OCI-LY7 (cell line): ENCODE measurements at regions of chr21 and their contacts with region 1.

Region 1: DNA sequence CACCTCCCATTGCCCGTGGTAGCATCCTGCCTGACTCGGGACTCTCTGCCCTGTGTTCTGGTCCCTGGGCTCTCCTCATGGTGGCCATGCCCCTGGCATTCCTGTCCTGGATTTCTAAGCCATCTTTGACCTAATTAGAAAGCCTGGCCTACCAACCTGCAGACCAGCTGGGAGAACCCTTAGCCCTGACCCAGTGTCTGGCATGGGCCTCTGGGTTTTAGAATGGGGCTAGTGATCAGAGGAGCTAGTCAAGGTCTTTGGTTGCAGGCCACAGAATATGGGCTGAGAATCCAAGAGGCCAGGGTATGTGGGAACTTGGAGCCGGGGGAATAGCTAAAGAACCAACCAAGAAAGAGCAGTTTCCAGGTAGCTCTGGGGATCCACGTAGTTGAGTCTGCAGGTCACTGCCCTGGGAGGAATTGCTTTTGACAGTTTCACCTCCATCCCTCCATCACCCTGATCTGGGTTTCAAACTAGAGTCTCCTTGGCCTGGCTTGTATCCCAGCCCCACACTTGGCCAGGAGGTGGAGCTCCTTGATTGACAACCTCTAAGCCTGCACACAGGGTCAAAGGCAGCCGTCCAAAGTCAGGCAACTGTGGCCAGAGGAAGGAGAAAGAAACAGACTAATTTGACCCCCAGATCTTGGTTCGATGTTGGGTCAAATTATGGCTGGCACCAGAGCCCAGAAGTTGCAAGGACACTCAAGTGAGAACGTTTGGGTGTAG is 54.7 kb upstream of the ABCG1 start:
- DNase-seq: peak; percentile 87
- H3K4me3 ChIP-seq: no peak overlapping the region
- H3K27ac ChIP-seq: peak overlapping the region; percentile 41
- H3K4me1 ChIP-seq: peaks cover 29% of the 10 kb centered on the region
- CTCF ChIP-seq: peak; percentile 99

Region 2: DNA sequence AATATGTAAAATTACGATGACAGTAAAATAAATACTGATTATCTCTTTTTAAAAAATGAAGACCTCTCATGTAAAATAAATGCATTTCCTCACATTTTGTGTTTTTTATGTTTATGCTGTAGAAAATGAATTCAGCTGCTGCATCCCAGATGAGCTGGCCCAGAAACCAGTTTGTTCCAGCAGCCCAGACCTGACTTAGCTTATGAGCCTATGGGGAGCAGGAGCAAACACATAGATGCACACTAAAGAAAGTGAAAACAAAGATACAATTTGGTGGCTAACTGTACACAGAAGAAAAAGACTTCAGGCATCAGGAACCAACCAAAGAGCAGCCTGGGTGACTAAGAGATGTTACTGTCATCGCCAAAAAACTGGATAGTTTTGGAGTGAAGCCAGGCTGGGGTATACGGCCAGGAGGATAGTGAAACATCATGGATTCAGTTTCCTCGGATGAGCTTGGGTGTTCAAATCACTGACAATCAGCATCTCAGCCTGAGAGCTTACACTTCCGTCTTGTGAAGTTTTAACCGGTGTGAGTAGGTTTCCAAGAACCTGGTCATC is 1110.1 kb before region 1 on chr21:
- CTCF ChIA-PET with region 1: no interaction called
- POLR2A ChIA-PET with region 1: no interaction called
- intact Hi-C with region 1: no loop called
- DNase-seq: no peak
- H3K4me3 ChIP-seq: no peak overlapping the region
- H3K27ac ChIP-seq: no peak overlapping the region
- H3K4me1 ChIP-seq: no peaks in the 10 kb centered on the region
- CTCF ChIP-seq: no peak

Region 3: DNA sequence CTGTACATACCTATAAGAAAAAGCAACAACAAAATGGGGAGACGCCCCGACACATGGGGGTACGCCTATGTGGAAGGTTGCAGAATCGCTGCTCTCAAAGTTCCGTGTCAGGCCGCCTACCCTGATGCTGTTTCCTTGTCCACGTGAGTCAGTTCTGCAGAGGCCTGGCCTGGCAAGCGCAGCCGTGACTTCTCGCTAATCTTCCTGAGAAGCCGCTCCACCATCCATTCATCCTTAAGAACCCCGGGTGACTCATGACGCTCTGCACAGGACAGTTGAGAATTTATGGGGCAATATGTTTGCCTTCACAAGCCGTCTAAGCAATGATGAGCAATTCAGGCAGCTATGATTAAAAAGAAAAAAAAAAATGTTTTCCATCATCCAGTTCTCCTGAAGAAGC is 534.0 kb before region 1 on chr21:
- CTCF ChIA-PET with region 1: no interaction called
- POLR2A ChIA-PET with region 1: no interaction called
- intact Hi-C with region 1: no loop called
- DNase-seq: no peak
- H3K4me3 ChIP-seq: no peak overlapping the region
- H3K27ac ChIP-seq: no peak overlapping the region
- H3K4me1 ChIP-seq: no peaks in the 10 kb centered on the region
- CTCF ChIP-seq: no peak

Region 4: DNA sequence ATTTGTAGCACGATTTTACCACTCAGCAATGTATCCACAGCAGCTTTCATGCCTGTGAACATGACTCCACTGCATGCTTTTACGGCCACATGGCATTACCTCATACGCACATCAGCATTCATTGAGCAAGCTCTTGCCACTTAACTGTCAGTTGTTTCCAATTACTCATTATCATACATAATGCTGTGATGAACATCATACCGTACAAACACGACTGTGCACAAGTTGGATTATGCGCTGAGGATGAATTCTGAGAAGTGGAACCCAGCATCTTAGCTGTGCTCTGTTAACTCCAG is 83.5 kb before region 1 on chr21:
- CTCF ChIA-PET with region 1: no interaction called
- POLR2A ChIA-PET with region 1: no interaction called
- intact Hi-C with region 1: no loop called
- DNase-seq: no peak
- H3K4me3 ChIP-seq: no peak overlapping the region
- H3K27ac ChIP-seq: no peak overlapping the region
- H3K4me1 ChIP-seq: peaks cover 48% of the 10 kb centered on the region
- CTCF ChIP-seq: no peak

Region 5: GRCh38 chr21:42176859-42177258 is 12.6 kb after region 1 on chr21:
- CTCF ChIA-PET with region 1: no interaction called
- POLR2A ChIA-PET with region 1: no interaction called
- intact Hi-C with region 1: no loop called
- DNase-seq: no peak
- H3K4me3 ChIP-seq: no peak overlapping the region
- H3K27ac ChIP-seq: no peak overlapping the region
- H3K4me1 ChIP-seq: peaks cover 14% of the 10 kb centered on the region
- CTCF ChIP-seq: no peak

Region 6: GRCh38 chr21:42220138-42220701 is 56.0 kb after region 1 on chr21:
- CTCF ChIA-PET with region 1: no interaction called
- POLR2A ChIA-PET with region 1: no interaction called
- intact Hi-C with region 1: loop called (anchors 1 kb)
- DNase-seq: peak; percentile 89
- H3K4me3 ChIP-seq: peak overlapping the region; percentile 94
- H3K27ac ChIP-seq: peak overlapping the region; percentile 78
- H3K4me1 ChIP-seq: peaks cover 60% of the 10 kb centered on the region
- CTCF ChIP-seq: no peak

Region 7: DNA sequence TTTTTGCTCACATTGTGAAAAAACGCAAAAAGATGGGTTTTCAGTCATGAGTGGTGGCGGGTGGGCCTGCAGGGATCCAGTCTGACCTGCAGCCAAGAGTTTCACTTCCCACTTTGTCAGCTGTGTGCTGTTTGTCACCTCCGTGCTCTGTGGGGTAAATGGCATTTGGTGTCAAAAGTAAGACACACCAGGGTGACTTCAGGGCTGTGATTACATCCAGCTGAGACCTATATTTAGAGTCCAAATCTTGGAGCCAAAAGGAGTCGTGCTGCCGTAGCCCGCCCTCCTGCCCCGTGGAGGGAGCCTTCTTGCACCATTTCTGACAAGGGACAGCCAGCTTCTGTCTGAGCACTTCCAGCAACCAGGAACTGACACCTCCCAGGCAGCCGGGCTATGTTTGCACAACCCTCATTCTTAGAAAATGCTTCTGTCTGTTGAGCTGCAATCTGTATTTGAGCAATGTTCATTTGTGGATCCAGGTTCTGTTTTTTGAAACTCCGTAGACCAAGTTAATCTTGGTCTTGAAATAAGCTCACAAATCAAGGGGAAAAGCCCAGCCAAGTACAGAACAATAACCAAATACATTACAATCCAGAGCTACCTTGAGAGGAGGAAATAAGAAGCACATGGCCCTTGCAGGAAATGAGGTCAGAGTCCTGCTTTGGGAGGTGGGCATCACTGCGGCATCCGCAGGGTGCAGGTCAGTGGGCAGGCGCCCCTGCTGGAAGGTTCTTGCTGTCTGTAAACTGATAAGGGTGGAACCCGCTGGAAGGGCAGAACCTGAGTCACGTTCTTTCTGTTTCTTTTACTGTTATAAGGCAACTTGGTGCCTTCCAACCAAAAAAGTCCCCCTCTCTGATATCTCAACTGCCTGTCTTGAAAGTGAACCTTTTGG is 69.1 kb after region 1 on chr21:
- CTCF ChIA-PET with region 1: interaction called, 6 read pairs
- POLR2A ChIA-PET with region 1: interaction called, 4 read pairs
- intact Hi-C with region 1: loop called (anchors 2 kb)
- DNase-seq: peak; percentile 97
- H3K4me3 ChIP-seq: peak overlapping the region; percentile 61
- H3K27ac ChIP-seq: peak overlapping the region; percentile 99
- H3K4me1 ChIP-seq: peaks cover 99% of the 10 kb centered on the region
- CTCF ChIP-seq: peak; percentile 64

Region 8: DNA sequence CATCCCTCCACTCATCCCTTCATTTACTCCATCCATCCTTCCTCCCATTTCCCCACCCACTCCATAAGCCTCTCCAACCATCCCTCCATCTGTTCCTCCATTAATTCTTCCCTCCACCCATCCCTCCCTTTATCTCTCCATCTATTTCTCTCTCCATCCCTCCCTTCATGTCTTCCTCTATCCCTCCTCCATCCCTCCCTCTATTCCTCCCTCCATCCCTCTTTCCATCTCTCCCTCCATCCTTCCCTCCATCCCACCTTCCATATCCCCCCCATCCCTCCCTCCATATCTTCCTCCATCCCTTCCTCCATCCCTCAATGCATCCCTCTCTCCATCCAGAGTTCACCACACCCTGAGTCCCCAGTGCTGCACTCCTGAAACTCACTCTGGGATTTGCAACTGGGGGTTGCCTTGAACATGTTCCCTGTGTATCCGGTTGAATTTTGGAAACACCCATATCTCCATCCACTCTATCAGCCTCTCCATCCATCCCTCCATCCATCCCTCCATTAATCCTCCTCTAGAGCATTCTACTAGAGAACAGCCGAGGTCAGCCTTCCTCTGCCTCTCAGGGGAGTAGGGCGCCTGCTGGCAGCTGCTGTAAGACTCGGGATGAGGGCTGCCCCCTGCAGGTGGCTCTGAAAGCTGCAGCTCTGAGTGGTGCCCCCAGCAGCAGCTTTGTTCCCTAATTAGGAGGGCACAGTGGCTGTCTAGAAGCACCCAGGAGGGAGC is 94.1 kb after region 1 on chr21:
- CTCF ChIA-PET with region 1: interaction called, 13 read pairs
- POLR2A ChIA-PET with region 1: interaction called, 6 read pairs
- intact Hi-C with region 1: loop called (anchors 1 kb)
- DNase-seq: peak; percentile 87
- H3K4me3 ChIP-seq: no peak overlapping the region
- H3K27ac ChIP-seq: no peak overlapping the region
- H3K4me1 ChIP-seq: peaks cover 48% of the 10 kb centered on the region
- CTCF ChIP-seq: peak; percentile 99

Region 9: DNA sequence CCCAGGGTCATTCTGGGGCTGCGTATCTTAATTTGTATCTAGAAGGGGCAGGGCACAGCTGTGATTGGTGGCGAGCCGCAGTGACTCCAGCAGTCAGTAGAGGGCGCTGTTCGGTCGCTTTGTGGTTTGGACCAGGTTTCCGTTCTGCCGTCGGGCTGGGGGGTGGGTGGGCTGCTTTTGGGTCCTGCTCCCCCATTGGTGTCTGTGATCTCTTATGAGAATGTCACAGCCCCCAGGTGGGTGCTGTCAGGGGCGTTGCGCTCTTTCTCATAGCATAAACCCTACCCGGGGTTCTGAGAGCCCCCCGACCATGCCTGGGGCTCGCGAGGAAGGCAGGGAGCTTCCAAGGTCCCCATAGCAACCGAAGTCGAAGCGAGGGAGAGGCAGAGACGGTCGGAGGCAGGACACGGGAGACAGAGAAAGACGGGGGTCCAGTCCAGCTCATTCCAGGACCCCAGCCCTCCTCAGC is 145.6 kb after region 1 on chr21:
- CTCF ChIA-PET with region 1: no interaction called
- POLR2A ChIA-PET with region 1: interaction called, 3 read pairs
- intact Hi-C with region 1: loop called (anchors 2 kb)
- DNase-seq: peak; percentile 73
- H3K4me3 ChIP-seq: no peak overlapping the region
- H3K27ac ChIP-seq: no peak overlapping the region
- H3K4me1 ChIP-seq: peaks cover 15% of the 10 kb centered on the region
- CTCF ChIP-seq: peak; percentile 91

Region 10: GRCh38 chr21:42381334-42381984 is 217.2 kb after region 1 on chr21:
- CTCF ChIA-PET with region 1: no interaction called
- POLR2A ChIA-PET with region 1: no interaction called
- intact Hi-C with region 1: loop called (anchors 1 kb)
- DNase-seq: peak; percentile 64
- H3K4me3 ChIP-seq: no peak overlapping the region
- H3K27ac ChIP-seq: no peak overlapping the region
- H3K4me1 ChIP-seq: peaks cover 12% of the 10 kb centered on the region
- CTCF ChIP-seq: peak; percentile 89

Region 11: DNA sequence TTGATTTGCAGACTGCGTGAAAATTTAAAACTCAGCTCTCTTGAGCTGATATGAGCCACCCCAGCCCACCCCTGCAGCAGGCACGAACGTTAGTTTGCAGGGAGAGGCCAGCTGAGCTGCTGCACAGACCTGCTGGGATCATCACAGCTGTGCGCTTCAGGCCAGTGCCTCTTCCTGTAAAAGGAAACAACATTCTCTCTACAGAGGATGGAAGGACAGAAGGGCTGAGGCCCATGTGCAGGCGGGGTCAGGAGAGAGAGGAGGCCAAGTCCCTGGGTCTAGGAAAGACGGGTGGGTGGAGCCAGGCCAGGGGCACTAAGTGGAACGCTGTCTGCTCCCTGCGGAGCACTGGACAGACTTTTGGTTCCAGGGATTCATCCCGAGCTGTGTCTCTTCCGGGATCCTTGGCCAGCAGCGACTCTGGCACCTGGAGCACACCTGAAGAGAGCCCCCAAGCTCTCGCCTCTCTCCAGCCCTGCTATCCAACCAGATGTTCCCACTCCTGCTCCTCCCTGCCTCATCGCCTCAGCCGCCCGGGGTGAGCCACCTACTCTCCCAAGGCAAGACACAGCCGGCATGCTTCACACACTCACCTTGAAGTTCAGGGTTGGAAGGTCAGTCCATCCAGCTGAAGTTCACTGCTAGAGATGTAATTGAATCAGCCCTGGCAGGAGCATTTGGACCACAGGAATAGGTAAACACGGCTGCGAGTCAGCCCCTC is 289.4 kb after region 1 on chr21:
- CTCF ChIA-PET with region 1: no interaction called
- POLR2A ChIA-PET with region 1: interaction called, 3 read pairs
- intact Hi-C with region 1: loop called (anchors 1 kb)
- DNase-seq: no peak
- H3K4me3 ChIP-seq: no peak overlapping the region
- H3K27ac ChIP-seq: no peak overlapping the region
- H3K4me1 ChIP-seq: peaks cover 29% of the 10 kb centered on the region
- CTCF ChIP-seq: no peak